ENCODE measurements at regions of chr7 and their contacts with region 1.

Region 1: DNA sequence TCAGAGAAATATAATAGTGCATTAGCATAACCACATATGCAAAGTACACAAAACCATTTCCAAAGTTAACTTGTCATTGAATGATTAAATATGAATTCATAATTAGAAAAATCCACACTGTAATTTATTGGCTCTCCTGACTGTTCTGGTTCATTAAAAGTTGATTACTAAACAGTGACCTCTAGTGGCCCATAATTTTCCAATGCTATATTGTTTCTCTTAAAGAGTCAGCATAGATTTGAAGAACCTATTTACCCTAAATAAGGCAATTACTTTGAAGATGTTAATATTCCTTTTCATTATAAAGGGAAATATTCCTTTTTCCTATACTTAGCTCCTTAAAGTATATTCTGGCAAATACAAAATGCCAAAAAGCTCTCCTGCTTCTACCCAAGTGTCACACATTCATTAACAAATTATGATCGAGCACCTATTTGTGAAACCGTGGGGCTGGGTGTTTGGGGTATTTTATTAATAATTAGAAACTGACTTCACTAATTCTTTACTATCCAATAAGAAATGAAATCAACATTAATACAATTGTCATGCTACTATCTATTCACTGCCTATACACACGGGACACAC is 86.2 kb downstream of the HIBADH start:
- DNase-seq: no peak
- ATAC-seq: no peak
- H3K4me3 Mint-ChIP-seq: no peak overlapping the region
- H3K27ac Mint-ChIP-seq: no peak overlapping the region
- H3K4me1 Mint-ChIP-seq: no peaks in the 10 kb centered on the region
- H3K27me3 Mint-ChIP-seq: no peaks in the 10 kb centered on the region
- CTCF ChIP-seq: peak; percentile 26

Region 2: DNA sequence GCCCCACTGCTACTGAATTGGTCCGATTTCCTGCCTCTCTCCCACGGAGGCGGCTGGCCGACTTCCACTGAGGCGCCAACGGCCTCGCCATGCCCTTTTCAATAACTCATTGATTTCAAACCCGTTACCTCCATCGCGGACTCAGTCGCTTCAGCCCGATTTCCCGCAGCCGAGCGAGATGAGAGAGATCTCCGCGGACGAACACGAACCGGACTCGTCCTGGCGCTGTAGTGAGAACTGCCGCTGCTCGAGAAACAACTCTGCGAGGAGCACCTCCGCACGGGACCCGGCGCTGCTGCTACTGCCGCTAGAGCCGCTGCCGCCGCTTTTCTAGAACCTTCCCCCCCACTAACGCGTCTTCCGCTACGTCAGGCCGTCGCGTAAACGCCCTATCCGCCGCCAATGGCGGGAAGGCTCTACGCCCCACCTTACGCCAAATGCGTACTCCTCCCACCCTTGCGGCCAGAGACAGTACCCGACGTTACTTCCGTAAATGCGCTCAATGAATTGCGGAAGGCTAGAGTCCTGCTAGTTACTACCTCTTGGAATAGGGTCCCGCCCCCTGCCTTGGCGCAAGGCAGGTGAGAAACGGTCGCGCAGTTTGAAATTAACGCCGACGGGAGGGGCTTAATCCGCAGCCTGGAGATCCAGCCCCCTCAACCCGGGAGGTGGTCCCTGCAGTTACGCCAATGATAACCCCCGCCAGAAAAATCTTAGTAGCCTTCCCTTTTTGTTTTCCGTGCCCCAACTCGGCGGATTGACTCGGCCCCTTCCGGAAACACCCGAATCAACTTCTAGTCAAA is 1375.8 kb before region 1 on chr7 and contains the start of gene HNRNPA2B1:
- CTCF ChIA-PET with region 1: no interaction called
- POLR2A ChIA-PET with region 1: no interaction called
- intact Hi-C with region 1: no loop called
- DNase-seq: peak; percentile 95
- ATAC-seq: peak; percentile 66
- H3K4me3 Mint-ChIP-seq: peak within 1 kb of the TSS; percentile 99
- H3K27ac Mint-ChIP-seq: peak within 1 kb of the TSS; percentile 100
- H3K4me1 Mint-ChIP-seq: peaks cover 55% of the 10 kb centered on the region
- H3K27me3 Mint-ChIP-seq: no peaks in the 10 kb centered on the region
- CTCF ChIP-seq: no peak
- total RNA-seq, gene HNRNPA2B1: 618 and 634 TPM in 2 replicates

Region 3: DNA sequence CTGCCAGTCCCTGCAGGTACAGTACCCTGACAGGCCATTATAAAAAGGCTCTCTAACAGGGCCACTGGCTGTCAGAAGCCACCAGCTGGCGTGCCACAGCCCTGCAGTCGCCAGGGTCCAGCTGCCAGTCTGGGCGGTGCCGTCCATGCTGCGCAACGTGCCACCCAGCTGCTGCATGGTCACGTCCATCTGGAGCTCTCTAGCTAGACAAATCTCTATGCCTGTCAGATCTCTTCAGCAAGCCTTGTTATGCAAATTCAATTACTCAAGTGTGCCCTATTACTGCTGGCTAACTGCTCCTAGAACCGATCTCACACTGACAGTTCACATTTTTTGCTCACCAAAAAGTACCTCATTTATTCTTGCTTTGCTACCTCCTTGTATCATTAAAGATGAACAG is 10.4 kb after region 1 on chr7:
- CTCF ChIA-PET with region 1: interaction called, 11 read pairs
- POLR2A ChIA-PET with region 1: no interaction called
- intact Hi-C with region 1: no loop called
- DNase-seq: peak; percentile 23
- ATAC-seq: peak; percentile 97
- H3K4me3 Mint-ChIP-seq: peak overlapping the region; percentile 12
- H3K27ac Mint-ChIP-seq: no peak overlapping the region
- H3K4me1 Mint-ChIP-seq: peaks cover 17% of the 10 kb centered on the region
- H3K27me3 Mint-ChIP-seq: peaks cover 12% of the 10 kb centered on the region
- CTCF ChIP-seq: no peak

Region 4: GRCh38 chr7:27616914-27617548 is 40.6 kb after region 1 on chr7:
- CTCF ChIA-PET with region 1: no interaction called
- POLR2A ChIA-PET with region 1: no interaction called
- intact Hi-C with region 1: no loop called
- DNase-seq: no peak
- ATAC-seq: no peak
- H3K4me3 Mint-ChIP-seq: no peak overlapping the region
- H3K27ac Mint-ChIP-seq: no peak overlapping the region
- H3K4me1 Mint-ChIP-seq: no peaks in the 10 kb centered on the region
- H3K27me3 Mint-ChIP-seq: no peaks in the 10 kb centered on the region
- CTCF ChIP-seq: no peak

Region 5: GRCh38 chr7:27774717-27775328 is 198.4 kb after region 1 on chr7:
- CTCF ChIA-PET with region 1: no interaction called
- POLR2A ChIA-PET with region 1: no interaction called
- intact Hi-C with region 1: loop called (anchors 10 kb)
- DNase-seq: no peak
- ATAC-seq: no peak
- H3K4me3 Mint-ChIP-seq: no peak overlapping the region
- H3K27ac Mint-ChIP-seq: no peak overlapping the region
- H3K4me1 Mint-ChIP-seq: no peaks in the 10 kb centered on the region
- H3K27me3 Mint-ChIP-seq: no peaks in the 10 kb centered on the region
- CTCF ChIP-seq: no peak